ENCODE measurements at regions of chr16 and their contacts with region 1.

Region 1: GRCh38 chr16:69396187-69397061 is 10.6 kb upstream of the TERF2 start:
- DNase-seq: peak in 3 of 5 donors; percentile 61 to 76 (median 72)
- ATAC-seq: peak; percentile 29 to 55 (median 47)
- H3K4me3 ChIP-seq: no peak overlapping the region
- H3K27ac ChIP-seq: peak overlapping the region in 11 of 12 donors; percentile 47 to 86 (median 68)
- H3K4me1 ChIP-seq: peaks cover 0 to 34% (median 19%) of the 10 kb centered on the region in 12 donors
- H3K27me3 ChIP-seq: no peaks in the 10 kb centered on the region
- CTCF ChIP-seq: peak in 9 of 12 donors; percentile 54 to 83 (median 70)
- POLR2A ChIP-seq: no peak

Region 2: GRCh38 chr16:69083329-69083941 is 313.0 kb before region 1 on chr16:
- intact Hi-C with region 1: no loop called
- DNase-seq: no peak
- ATAC-seq: no peak
- H3K4me3 ChIP-seq: no peak overlapping the region
- H3K27ac ChIP-seq: no peak overlapping the region
- H3K4me1 ChIP-seq: peaks cover 0 to 11% (median 2%) of the 10 kb centered on the region in 12 donors
- H3K27me3 ChIP-seq: no peaks in the 10 kb centered on the region
- CTCF ChIP-seq: peak in 1 of 12 donors; percentile 19
- POLR2A ChIP-seq: no peak

Region 3: GRCh38 chr16:69465083-69465721 is 68.8 kb after region 1 on chr16:
- intact Hi-C with region 1: loop called in 2 of 10 experiments (anchors 10 kb)
- DNase-seq: no peak
- ATAC-seq: no peak
- H3K4me3 ChIP-seq: no peak overlapping the region
- H3K27ac ChIP-seq: no peak overlapping the region
- H3K4me1 ChIP-seq: peaks cover 0 to 22% (median 2%) of the 10 kb centered on the region in 12 donors
- H3K27me3 ChIP-seq: peaks cover 0 to 18% (median 0%) of the 10 kb centered on the region in 9 donors
- CTCF ChIP-seq: no peak
- POLR2A ChIP-seq: no peak

Region 4: GRCh38 chr16:69618307-69618706 is 221.9 kb after region 1 on chr16:
- intact Hi-C with region 1: loop called in 2 of 10 experiments (anchors 5 to 10 kb)
- DNase-seq: no peak
- ATAC-seq: peak; percentile 59 to 75 (median 74)
- H3K4me3 ChIP-seq: no peak overlapping the region
- H3K27ac ChIP-seq: peak overlapping the region in 11 of 12 donors; percentile 17 to 75 (median 59)
- H3K4me1 ChIP-seq: peaks cover 0 to 69% (median 36%) of the 10 kb centered on the region in 12 donors
- H3K27me3 ChIP-seq: no peaks in the 10 kb centered on the region
- CTCF ChIP-seq: no peak
- POLR2A ChIP-seq: no peak

Region 5: GRCh38 chr16:69644790-69645189 is 248.4 kb after region 1 on chr16:
- intact Hi-C with region 1: loop called in 4 of 10 experiments (anchors 10 kb)
- DNase-seq: no peak
- ATAC-seq: no peak
- H3K4me3 ChIP-seq: no peak overlapping the region
- H3K27ac ChIP-seq: no peak overlapping the region
- H3K4me1 ChIP-seq: peaks cover 0 to 11% (median 0%) of the 10 kb centered on the region in 12 donors
- H3K27me3 ChIP-seq: no peaks in the 10 kb centered on the region
- CTCF ChIP-seq: no peak
- POLR2A ChIP-seq: no peak

Region 6: GRCh38 chr16:69709456-69710084 is 313.1 kb after region 1 on chr16:
- intact Hi-C with region 1: loop called in 1 of 10 experiments (anchors 10 kb)
- DNase-seq: no peak
- ATAC-seq: peak in 2 of 4 donors; percentile 57 to 58
- H3K4me3 ChIP-seq: no peak overlapping the region
- H3K27ac ChIP-seq: peak overlapping the region in 6 of 12 donors; percentile 14 to 36 (median 26)
- H3K4me1 ChIP-seq: peaks cover 0 to 9% (median 0%) of the 10 kb centered on the region in 12 donors
- H3K27me3 ChIP-seq: no peaks in the 10 kb centered on the region
- CTCF ChIP-seq: peak; percentile 53 to 83 (median 70)
- POLR2A ChIP-seq: no peak